Activated CD8-positive, alpha-beta T cell treated with anti-CD3 and anti-CD28 coated beads for 36 hours (primary cell): ENCODE measurements at regions of chr17 and their contacts with region 1.

Region 1: DNA sequence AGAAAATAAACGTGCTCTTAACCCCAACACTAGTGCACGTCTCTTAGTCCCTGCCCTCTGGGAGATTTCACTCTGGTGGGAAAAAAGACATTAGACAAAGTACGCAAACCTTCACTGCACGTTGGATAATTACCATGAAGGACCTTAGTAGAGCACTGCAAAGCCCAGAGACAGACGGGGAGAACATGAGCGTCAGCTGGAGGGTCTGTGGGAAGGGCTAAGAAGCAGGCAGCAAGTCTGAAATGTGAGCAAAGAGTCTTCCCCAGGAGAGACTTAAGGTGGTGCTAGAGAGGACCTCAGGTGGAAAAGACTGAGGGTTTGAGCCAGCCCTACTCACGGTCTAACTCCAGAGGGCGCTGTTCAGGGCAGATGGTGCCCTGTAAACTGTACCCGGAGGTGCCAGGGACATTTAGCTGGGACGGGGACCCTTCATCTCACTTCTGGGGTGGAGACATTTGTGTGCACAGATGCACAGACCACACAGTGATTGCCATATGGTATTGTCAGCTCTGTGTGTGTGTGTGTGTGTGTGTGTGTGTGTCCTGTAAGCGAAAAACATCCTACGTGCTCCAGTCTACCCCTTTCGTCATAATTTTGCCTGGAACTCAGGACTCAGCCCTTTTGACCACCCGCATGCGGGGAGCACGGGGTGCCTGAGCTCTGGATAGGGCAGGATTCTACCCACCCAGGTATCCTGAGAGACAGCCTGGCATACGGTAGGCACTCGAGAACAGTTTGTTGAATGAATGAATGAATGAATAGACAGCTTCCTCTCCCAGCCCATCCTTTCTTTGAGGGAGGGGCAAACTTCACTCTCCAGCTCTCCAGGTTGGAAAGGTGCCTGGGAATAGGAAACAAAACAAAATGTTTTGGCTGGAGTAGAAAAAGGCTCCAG is 10.1 kb upstream of the STAC2 start:
- DNase-seq: peak; percentile 80
- ATAC-seq: peak; percentile 77
- H3K4me3 Mint-ChIP-seq: no peak overlapping the region
- H3K27ac Mint-ChIP-seq: no peak overlapping the region
- H3K4me1 Mint-ChIP-seq: peaks cover 35% of the 10 kb centered on the region
- H3K27me3 Mint-ChIP-seq: peaks cover 2% of the 10 kb centered on the region
- CTCF ChIP-seq: peak; percentile 83

Region 2: DNA sequence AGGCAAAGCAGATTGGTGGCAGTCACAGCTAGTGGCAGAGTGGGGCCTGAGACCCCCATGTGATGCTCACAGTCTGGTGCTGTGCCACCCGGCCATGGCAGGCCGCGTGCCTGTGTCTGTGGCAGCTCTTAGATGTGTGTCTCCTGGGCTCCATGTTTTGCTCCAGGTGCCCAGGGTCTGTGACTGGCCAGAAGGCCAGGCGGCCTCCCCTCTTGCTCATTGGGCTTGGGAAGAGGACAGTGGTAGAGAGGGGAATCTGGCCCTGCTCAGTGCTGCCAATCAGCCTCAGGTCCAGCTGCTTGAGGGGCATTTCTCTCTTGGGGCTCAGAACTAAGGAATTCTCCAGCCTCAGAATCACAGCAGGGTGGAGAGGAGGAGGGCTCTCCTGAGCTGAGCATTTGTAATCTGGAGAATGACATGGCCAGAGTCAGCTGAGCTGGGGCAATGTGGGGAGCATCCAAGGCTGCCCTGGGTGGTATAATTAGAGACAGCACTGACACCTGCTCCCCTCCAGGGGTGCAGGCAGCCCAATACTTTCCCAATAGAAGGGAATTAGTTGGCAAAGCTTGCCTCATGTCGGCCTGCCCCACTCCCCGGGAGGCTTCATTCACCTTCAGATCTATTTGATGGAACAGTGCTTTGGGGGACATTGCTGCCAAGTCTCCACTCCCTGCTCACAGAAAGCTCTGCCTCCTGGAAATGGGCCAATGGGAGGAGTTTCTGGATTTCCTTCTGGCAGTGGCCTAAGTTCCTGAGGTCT is 313.1 kb before region 1 on chr17:
- CTCF ChIA-PET with region 1: no interaction called
- POLR2A ChIA-PET with region 1: no interaction called
- intact Hi-C with region 1: no loop called
- DNase-seq: no peak
- ATAC-seq: no peak
- H3K4me3 Mint-ChIP-seq: no peak overlapping the region
- H3K27ac Mint-ChIP-seq: peak overlapping the region; percentile 62
- H3K4me1 Mint-ChIP-seq: peaks cover 53% of the 10 kb centered on the region
- H3K27me3 Mint-ChIP-seq: no peaks in the 10 kb centered on the region
- CTCF ChIP-seq: no peak

Region 3: DNA sequence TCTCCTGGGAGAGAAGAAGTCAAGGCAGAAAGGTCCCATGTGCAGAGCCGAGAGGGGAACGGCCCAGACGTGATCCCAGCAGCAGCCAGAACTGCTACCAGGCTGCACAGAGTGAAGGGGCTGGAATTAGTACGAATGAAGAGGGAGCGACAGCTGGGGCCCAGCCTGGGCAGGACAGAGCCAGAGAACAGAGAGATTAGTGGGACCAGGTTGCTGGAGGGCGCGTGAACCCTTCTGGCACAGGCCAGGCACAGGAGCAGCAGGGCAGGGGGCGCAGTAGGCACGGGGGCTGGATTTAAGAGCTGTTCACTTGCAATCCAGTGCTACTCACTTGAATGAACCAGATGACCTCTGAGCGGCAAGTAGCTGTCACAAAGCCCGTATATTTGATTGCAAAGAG is 151.2 kb before region 1 on chr17:
- CTCF ChIA-PET with region 1: no interaction called
- POLR2A ChIA-PET with region 1: no interaction called
- intact Hi-C with region 1: no loop called
- DNase-seq: no peak
- ATAC-seq: no peak
- H3K4me3 Mint-ChIP-seq: no peak overlapping the region
- H3K27ac Mint-ChIP-seq: no peak overlapping the region
- H3K4me1 Mint-ChIP-seq: peaks cover 2% of the 10 kb centered on the region
- H3K27me3 Mint-ChIP-seq: no peaks in the 10 kb centered on the region
- CTCF ChIP-seq: no peak

Region 4: DNA sequence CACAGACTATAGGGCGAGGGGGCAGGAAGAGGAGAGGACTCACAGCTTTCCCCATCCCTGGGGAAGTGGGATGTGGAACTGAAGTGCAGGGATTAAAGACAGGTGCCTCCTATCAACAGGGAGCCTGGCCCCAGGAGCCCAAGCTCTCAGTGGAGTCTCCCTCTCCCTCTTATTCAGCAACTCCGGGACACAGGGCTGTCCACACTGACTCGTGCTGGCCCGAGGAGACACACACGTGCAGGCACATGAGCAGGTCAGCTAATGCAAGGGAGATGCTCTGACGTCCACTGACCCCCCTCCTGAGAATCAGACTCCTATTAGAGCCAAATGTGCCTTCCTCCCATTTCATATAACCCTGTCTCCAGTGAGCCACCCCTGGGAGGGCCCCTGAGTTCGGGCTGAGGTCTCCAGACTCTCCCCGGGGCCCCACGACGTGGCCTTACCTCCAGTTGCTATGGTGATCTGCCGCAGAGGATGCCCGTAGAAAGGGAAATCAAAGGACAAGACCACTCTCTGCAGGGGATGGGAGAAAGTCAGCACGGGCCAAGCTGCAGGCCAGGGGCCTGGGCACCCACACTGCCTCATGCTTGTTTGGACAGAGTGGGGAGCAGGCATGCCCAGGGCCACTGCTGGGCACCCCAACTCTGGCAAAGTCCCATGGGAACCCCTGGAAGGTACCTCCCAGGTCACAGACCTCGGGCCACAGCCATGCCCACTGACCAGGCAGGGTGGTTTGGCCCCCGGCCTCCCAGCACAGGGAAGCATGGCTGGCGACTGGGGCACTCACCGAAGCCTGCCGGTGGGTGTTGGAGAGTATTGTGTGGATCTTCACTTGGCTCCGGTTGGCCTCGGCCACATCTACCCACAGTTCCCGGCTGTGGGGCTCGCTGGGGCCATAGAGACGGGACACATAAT is 127.1 kb before region 1 on chr17:
- CTCF ChIA-PET with region 1: no interaction called
- POLR2A ChIA-PET with region 1: no interaction called
- intact Hi-C with region 1: no loop called
- DNase-seq: no peak
- ATAC-seq: no peak
- H3K4me3 Mint-ChIP-seq: no peak overlapping the region
- H3K27ac Mint-ChIP-seq: no peak overlapping the region
- H3K4me1 Mint-ChIP-seq: no peaks in the 10 kb centered on the region
- H3K27me3 Mint-ChIP-seq: no peaks in the 10 kb centered on the region
- CTCF ChIP-seq: no peak

Region 5: DNA sequence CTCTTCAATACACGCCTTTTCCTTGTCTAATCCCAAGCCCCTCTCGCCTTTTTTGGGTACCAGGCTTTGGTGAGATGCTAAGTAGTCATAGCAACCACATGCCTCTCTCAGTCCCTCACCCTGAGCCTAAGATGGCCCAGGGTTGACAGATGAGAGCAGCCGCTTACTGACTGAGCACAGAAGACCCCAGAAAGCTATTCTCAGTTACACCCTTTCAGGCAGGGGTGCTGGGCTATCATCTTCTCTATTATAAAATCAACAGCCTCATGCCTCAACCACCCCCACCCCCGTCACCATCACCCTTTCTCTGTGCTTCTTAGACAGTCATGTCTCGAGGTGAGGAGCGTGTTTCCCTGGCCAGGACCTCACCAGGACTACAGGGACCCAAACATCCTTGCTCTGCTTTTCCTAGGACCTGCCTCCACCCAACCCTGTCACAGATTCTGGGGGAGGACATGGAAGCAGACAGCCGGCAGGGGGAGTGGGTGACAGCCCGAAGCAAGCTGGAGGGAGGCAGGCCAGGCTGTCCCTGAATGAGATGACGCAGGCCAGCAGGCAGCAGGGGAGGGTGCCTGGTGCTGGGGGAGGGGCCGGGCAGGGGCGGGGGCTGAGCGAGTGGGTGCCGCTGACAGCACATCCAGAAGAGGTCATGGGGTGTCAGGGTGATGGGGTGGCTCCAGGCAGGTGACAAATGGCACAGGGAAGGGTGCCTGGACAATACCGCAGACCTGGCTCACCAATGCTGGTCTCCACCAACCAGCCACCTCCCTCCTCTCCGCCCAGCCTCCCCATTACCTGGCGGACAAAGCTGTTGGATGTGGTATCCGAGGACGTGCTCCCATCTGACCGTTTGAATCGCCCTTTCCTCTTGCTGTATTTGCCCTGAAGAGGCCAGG is 41.5 kb before region 1 on chr17:
- CTCF ChIA-PET with region 1: interaction called, 516 read pairs
- POLR2A ChIA-PET with region 1: interaction called, 35 read pairs
- intact Hi-C with region 1: no loop called
- DNase-seq: no peak
- ATAC-seq: no peak
- H3K4me3 Mint-ChIP-seq: no peak overlapping the region
- H3K27ac Mint-ChIP-seq: no peak overlapping the region
- H3K4me1 Mint-ChIP-seq: peaks cover 22% of the 10 kb centered on the region
- H3K27me3 Mint-ChIP-seq: no peaks in the 10 kb centered on the region
- CTCF ChIP-seq: no peak

Region 6: DNA sequence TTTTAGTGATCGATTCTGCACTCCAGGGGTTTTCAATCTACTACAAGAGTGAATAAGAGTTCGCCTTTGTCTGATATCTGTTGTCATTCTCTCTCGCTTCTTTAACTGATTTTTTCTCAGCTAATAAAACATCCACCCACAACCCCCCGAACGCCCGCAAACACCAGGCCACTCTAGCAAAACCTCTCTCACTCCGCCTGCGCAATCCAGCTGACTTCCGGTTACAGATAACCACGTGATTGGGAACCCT is 36.1 kb before region 1 on chr17:
- CTCF ChIA-PET with region 1: interaction called, 516 read pairs
- POLR2A ChIA-PET with region 1: interaction called, 39 read pairs
- intact Hi-C with region 1: no loop called
- DNase-seq: peak; percentile 98
- ATAC-seq: peak; percentile 64
- H3K4me3 Mint-ChIP-seq: peak overlapping the region; percentile 90
- H3K27ac Mint-ChIP-seq: peak overlapping the region; percentile 99
- H3K4me1 Mint-ChIP-seq: peaks cover 53% of the 10 kb centered on the region
- H3K27me3 Mint-ChIP-seq: no peaks in the 10 kb centered on the region
- CTCF ChIP-seq: no peak

Region 7: DNA sequence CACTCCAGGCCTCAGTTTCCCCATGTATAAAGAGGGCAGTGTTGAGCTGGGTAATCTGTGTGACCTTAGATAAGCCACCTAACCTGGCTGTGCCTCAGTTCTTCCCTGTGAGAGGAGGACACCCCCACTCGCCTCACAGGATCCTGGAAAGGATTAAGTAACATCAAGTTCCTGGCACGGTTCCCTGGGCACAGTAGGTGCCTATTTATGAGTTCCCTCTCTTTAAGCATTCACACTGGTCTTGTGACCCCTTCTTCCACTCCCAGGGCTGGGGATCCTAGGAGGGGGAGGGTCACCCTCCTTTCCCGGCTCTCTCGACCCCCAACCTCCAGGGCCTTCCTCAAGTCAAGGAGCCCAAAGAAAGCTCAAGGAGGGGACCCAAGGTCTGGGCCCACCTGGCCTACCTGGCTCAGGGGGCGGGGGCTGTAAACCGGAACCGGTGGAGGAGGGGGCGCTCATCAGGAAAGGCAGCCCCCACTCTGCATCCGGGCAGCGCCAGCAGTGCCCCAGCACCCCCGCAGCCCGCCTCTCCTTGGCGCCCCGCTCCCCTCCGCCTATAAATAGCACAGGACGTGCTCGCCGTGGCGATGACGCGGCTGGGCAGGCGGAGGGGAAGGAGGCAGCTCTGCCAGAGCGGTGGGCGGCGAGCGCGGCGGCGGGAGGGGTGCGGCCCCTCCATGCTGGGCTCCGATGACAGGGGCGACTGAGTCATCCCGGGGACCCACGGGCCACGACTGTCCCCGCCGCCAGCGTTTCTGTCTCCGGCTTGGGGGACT is 26.3 kb before region 1 on chr17:
- CTCF ChIA-PET with region 1: interaction called, 516 read pairs
- POLR2A ChIA-PET with region 1: interaction called, 39 read pairs
- intact Hi-C with region 1: no loop called
- DNase-seq: peak; percentile 92
- ATAC-seq: peak; percentile 86
- H3K4me3 Mint-ChIP-seq: peak overlapping the region; percentile 44
- H3K27ac Mint-ChIP-seq: peak overlapping the region; percentile 77
- H3K4me1 Mint-ChIP-seq: peaks cover 38% of the 10 kb centered on the region
- H3K27me3 Mint-ChIP-seq: no peaks in the 10 kb centered on the region
- CTCF ChIP-seq: no peak

Region 8: GRCh38 chr17:39222866-39223834 is 12.7 kb before region 1 on chr17:
- CTCF ChIA-PET with region 1: interaction called, 516 read pairs
- POLR2A ChIA-PET with region 1: interaction called, 10 read pairs
- intact Hi-C with region 1: no loop called
- DNase-seq: no peak
- ATAC-seq: no peak
- H3K4me3 Mint-ChIP-seq: no peak overlapping the region
- H3K27ac Mint-ChIP-seq: no peak overlapping the region
- H3K4me1 Mint-ChIP-seq: peaks cover 10% of the 10 kb centered on the region
- H3K27me3 Mint-ChIP-seq: peaks cover 29% of the 10 kb centered on the region
- CTCF ChIP-seq: no peak